ENCODE measurements at regions of chr9 and their contacts with region 1.

Region 1: GRCh38 chr9:92325269-92325990 is at the starts of genes CENPP and NOL8:
- DNase-seq: peak; percentile 75 to 91 (median 89)
- ATAC-seq: peak; percentile 95
- H3K4me3 ChIP-seq: peak within 1 kb of the TSS; percentile 90
- H3K4me3 Mint-ChIP-seq: peak within 1 kb of the TSS; percentile 94 to 100 (median 98)
- H3K27ac ChIP-seq: peak within 1 kb of the TSS; percentile 88
- H3K27ac Mint-ChIP-seq: peak within 1 kb of the TSS; percentile 97 to 100 (median 99)
- H3K4me1 ChIP-seq: peaks cover 11 to 12% of the 10 kb centered on the region in 2 donors
- H3K4me1 Mint-ChIP-seq: peaks cover 14 to 41% (median 35%) of the 10 kb centered on the region in 7 donors
- H3K27me3 ChIP-seq: no peaks in the 10 kb centered on the region
- H3K27me3 Mint-ChIP-seq: no peaks in the 10 kb centered on the region
- total RNA-seq, gene CENPP: 2.5 to 24.3 (median 4.1) TPM
- total RNA-seq, gene NOL8: 42.8 to 115 (median 67.2) TPM

Region 2: GRCh38 chr9:92293452-92294296 is 31.8 kb before region 1 on chr9 and contains the start of gene IARS1:
- CTCF ChIA-PET with region 1: no interaction called
- POLR2A ChIA-PET with region 1: interaction called, 6 read pairs
- intact Hi-C with region 1: loop called (anchors 1 kb)
- DNase-seq: peak; percentile 97 to 100 (median 100)
- ATAC-seq: peak; percentile 98
- H3K4me3 ChIP-seq: peak within 1 kb of the TSS; percentile 61
- H3K4me3 Mint-ChIP-seq: peak within 1 kb of the TSS; percentile 85 to 99 (median 98)
- H3K27ac ChIP-seq: peak within 1 kb of the TSS; percentile 78
- H3K27ac Mint-ChIP-seq: peak within 1 kb of the TSS; percentile 95 to 100 (median 98)
- H3K4me1 ChIP-seq: peaks cover 17 to 33% of the 10 kb centered on the region in 2 donors
- H3K4me1 Mint-ChIP-seq: peaks cover 23 to 68% (median 62%) of the 10 kb centered on the region in 7 donors
- H3K27me3 ChIP-seq: no peaks in the 10 kb centered on the region
- H3K27me3 Mint-ChIP-seq: no peaks in the 10 kb centered on the region
- total RNA-seq, gene IARS1: 52.4 to 145 (median 97.7) TPM

Region 3: DNA sequence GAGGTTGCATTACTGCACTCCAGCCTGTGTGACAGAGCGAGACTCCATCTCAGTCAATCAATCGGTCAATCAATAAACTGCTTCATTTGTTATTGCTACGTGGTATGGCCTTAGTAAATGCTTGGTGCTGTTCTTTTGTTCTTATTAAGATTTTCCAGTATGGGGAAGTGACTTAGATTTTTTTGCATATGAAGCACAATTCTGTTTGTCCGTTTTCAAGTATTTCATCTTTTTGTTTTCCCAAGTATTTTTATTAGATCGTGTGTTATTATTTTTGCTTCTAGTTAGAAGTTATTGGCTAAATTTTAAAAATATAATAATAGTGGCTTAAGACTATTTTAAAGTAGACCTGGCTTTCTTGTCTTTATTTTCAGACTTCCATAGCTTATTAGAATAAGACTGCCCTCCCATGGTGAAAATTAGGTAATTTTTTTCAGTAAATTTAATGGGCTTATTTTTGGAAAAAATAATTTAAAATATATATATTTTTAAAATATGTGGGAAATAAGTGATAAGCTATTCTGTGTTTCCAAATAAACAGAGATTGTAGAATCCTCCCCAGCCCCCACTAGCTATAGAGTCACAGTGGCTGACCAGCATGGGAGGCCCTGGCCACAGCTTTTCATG is 113.6 kb after region 1 on chr9:
- CTCF ChIA-PET with region 1: no interaction called
- POLR2A ChIA-PET with region 1: no interaction called
- intact Hi-C with region 1: loop called in 1 of 2 experiments (anchors 1 kb)
- DNase-seq: peak in 2 of 9 donors; percentile 10 to 29
- ATAC-seq: no peak
- H3K4me3 ChIP-seq: no peak overlapping the region
- H3K4me3 Mint-ChIP-seq: no peak overlapping the region
- H3K27ac ChIP-seq: no peak overlapping the region
- H3K27ac Mint-ChIP-seq: peak overlapping the region in 1 of 9 donors; percentile 57
- H3K4me1 ChIP-seq: peaks cover 0 to 9% of the 10 kb centered on the region in 2 donors
- H3K4me1 Mint-ChIP-seq: peaks cover 0 to 10% (median 0%) of the 10 kb centered on the region in 7 donors
- H3K27me3 ChIP-seq: no peaks in the 10 kb centered on the region
- H3K27me3 Mint-ChIP-seq: no peaks in the 10 kb centered on the region

Region 4: GRCh38 chr9:92669890-92670708 is 344.7 kb after region 1 on chr9 and contains the start of gene IPPK:
- CTCF ChIA-PET with region 1: no interaction called
- POLR2A ChIA-PET with region 1: interaction called, 18 read pairs
- intact Hi-C with region 1: loop called in 1 of 2 experiments (anchors 1 kb)
- DNase-seq: peak; percentile 92 to 99 (median 96)
- ATAC-seq: peak; percentile 98
- H3K4me3 ChIP-seq: peak within 1 kb of the TSS; percentile 100
- H3K4me3 Mint-ChIP-seq: peak within 1 kb of the TSS; percentile 83 to 98 (median 95)
- H3K27ac ChIP-seq: peak within 1 kb of the TSS; percentile 91
- H3K27ac Mint-ChIP-seq: peak within 1 kb of the TSS; percentile 90 to 98 (median 95)
- H3K4me1 ChIP-seq: peaks cover 16 to 23% of the 10 kb centered on the region in 2 donors
- H3K4me1 Mint-ChIP-seq: peaks cover 27 to 46% (median 36%) of the 10 kb centered on the region in 7 donors
- H3K27me3 ChIP-seq: no peaks in the 10 kb centered on the region
- H3K27me3 Mint-ChIP-seq: no peaks in the 10 kb centered on the region
- total RNA-seq, gene IPPK: 5.9 to 12.8 (median 7.4) TPM

Region 5: DNA sequence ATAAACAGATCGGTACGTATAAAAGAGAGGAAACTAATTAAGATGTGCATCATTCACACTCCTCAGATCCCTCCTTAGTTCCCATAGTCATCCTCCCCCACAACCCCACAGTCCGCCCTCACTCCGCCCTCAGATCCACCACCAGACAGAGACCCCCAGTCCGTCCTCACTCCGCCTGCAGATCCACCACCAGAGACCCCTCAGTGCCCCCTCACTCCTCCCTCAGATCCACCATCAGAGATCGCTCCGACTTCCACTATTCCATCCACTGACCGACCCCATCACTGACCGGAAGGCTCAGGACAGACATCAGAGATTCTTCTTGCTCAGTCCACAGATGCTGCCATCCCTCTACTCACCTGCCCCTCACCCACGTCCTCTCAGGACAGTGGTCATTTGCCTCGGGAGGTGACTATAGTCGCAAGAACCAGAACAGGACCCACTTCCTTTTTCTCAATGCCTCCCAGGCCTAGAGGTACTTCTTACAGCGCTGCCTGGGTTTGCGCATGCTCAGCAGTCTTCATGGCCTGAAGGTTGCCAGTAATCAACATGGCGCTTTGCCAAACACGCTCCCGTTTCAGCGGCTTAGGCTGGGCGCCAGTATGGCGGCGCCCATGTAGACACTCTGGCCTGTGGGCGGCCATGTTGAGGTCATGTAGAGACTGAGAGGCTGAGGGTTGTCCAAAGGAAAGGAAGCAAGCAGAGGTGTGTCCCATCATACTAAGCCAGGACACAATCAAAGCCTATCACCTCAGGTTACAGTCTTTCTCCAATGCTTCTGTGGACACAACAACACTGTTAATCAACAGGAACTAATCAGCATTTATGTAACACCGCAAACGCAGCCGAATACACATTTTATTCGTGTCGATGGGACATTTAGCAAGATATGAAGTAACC is 552.4 kb after region 1 on chr9 and contains the start of gene ZNF484:
- CTCF ChIA-PET with region 1: no interaction called
- POLR2A ChIA-PET with region 1: no interaction called
- intact Hi-C with region 1: loop called in 1 of 2 experiments (anchors 1 kb)
- DNase-seq: peak; percentile 86 to 97 (median 94)
- ATAC-seq: peak; percentile 99
- H3K4me3 ChIP-seq: peak within 1 kb of the TSS; percentile 77
- H3K4me3 Mint-ChIP-seq: peak within 1 kb of the TSS; percentile 91 to 100 (median 99)
- H3K27ac ChIP-seq: peak within 1 kb of the TSS; percentile 90
- H3K27ac Mint-ChIP-seq: peak within 1 kb of the TSS; percentile 94 to 100 (median 99)
- H3K4me1 ChIP-seq: peaks cover 0 to 15% of the 10 kb centered on the region in 2 donors
- H3K4me1 Mint-ChIP-seq: peaks cover 28 to 69% (median 58%) of the 10 kb centered on the region in 7 donors
- H3K27me3 ChIP-seq: no peaks in the 10 kb centered on the region
- H3K27me3 Mint-ChIP-seq: no peaks in the 10 kb centered on the region
- total RNA-seq, gene ZNF484: 12.4 to 25.4 (median 14.0) TPM

Measured in naive thymus-derived CD4-positive, alpha-beta T cell (primary cell).